Endothelial cell of umbilical vein (primary cell): ENCODE measurements at regions of chr17 and their contacts with region 1.

Region 1: GRCh38 chr17:79747508-79748295 is 17.0 kb downstream of the ENPP7 start:
- DNase-seq: no peak
- H3K4me3 ChIP-seq: no peak overlapping the region
- H3K27ac ChIP-seq: no peak overlapping the region
- H3K4me1 ChIP-seq: no peaks in the 10 kb centered on the region
- H3K27me3 ChIP-seq: peaks cover 27 to 45% of the 10 kb centered on the region in 2 experiments
- CTCF ChIP-seq: no peak
- POLR2A ChIP-seq: no peak

Region 2: GRCh38 chr17:79400989-79401703 is 346.6 kb before region 1 on chr17:
- CTCF ChIA-PET with region 1: no interaction called
- POLR2A ChIA-PET with region 1: no interaction called
- dilution Hi-C with region 1: no loop called
- intact Hi-C with region 1: no loop called
- DNase-seq: peak; percentile 73
- H3K4me3 ChIP-seq: no peak overlapping the region
- H3K27ac ChIP-seq: no peak overlapping the region
- H3K4me1 ChIP-seq: peaks cover 4% of the 10 kb centered on the region
- H3K27me3 ChIP-seq: peaks cover 6 to 10% of the 10 kb centered on the region in 2 experiments
- CTCF ChIP-seq: peak; percentile 87 to 92
- POLR2A ChIP-seq: no peak

Region 3: GRCh38 chr17:79777894-79778503 is 30.3 kb after region 1 on chr17 and contains the start of gene CBX2:
- CTCF ChIA-PET with region 1: interaction called, 14 read pairs
- POLR2A ChIA-PET with region 1: no interaction called
- dilution Hi-C with region 1: no loop called
- intact Hi-C with region 1: no loop called
- DNase-seq: peak; percentile 58
- H3K4me3 ChIP-seq: peak within 1 kb of the TSS; percentile 67 to 95 (median 69)
- H3K27ac ChIP-seq: no peak within 1 kb of the TSS
- H3K4me1 ChIP-seq: peaks cover 20% of the 10 kb centered on the region
- H3K27me3 ChIP-seq: peaks cover 9 to 10% of the 10 kb centered on the region in 2 experiments
- CTCF ChIP-seq: no peak
- POLR2A ChIP-seq: no peak
- total RNA-seq, gene CBX2: 19.8 and 20.0 TPM in 2 replicates

Region 4: DNA sequence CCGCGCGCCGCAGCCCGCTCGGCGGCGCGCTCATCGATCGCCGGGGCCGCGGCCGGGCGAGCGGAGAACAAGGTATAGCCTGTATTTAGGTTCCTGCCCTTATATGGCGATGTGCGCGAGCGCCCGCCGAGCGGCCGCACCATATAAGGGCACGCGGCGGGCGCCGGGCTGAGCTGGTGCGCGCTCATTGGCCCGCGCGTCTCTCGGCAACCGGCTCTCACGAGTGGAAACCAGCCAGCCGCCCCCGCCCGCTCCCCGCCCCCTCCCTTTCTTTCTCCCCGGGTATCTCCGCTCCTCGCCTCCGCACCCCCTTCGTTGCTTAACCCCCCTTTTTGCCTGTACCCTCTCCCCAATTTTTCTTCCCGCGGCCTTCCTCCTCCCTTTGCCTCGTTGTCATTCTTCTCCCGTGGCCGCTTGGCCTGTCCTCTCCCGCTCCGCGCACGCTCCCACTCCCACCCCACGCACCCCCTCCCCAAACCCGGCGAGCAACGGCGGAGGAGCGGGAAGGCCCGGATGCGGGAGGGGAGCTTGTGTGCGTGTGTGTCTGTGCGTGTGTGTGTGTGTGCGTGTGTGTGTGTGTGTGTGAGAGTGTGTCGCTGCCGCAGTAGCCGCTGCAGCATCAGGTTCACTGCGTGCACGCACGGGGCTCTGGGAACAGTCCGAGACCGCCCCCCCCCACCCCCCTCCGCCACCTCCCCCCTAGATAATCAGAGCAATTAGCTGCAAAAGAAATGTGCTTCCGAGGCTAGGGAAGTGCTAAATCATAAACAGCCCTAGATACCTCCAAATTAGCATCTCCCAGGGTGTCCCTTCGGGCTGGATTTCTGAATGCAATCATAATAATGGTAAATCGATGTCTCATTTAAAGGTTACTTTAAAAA is 62.7 kb after region 1 on chr17:
- CTCF ChIA-PET with region 1: interaction called, 29 read pairs
- POLR2A ChIA-PET with region 1: interaction called, 5 read pairs
- dilution Hi-C with region 1: no loop called
- intact Hi-C with region 1: loop called (anchors 2 kb)
- DNase-seq: peak; percentile 64
- H3K4me3 ChIP-seq: no peak overlapping the region
- H3K27ac ChIP-seq: no peak overlapping the region
- H3K4me1 ChIP-seq: peaks cover 8% of the 10 kb centered on the region
- H3K27me3 ChIP-seq: peaks cover 69 to 82% of the 10 kb centered on the region in 2 experiments
- CTCF ChIP-seq: no peak
- POLR2A ChIP-seq: no peak

Region 5: GRCh38 chr17:79844869-79845600 is 97.3 kb after region 1 on chr17:
- CTCF ChIA-PET with region 1: interaction called, 14 read pairs
- POLR2A ChIA-PET with region 1: no interaction called
- dilution Hi-C with region 1: no loop called
- intact Hi-C with region 1: no loop called
- DNase-seq: no peak
- H3K4me3 ChIP-seq: no peak overlapping the region
- H3K27ac ChIP-seq: no peak overlapping the region
- H3K4me1 ChIP-seq: peaks cover 11% of the 10 kb centered on the region
- H3K27me3 ChIP-seq: peaks cover 37 to 48% of the 10 kb centered on the region in 2 experiments
- CTCF ChIP-seq: peak; percentile 56 to 88
- POLR2A ChIP-seq: no peak

Region 6: GRCh38 chr17:79874329-79874981 is 126.8 kb after region 1 on chr17:
- CTCF ChIA-PET with region 1: no interaction called
- POLR2A ChIA-PET with region 1: no interaction called
- dilution Hi-C with region 1: no loop called
- intact Hi-C with region 1: no loop called
- DNase-seq: peak; percentile 46
- H3K4me3 ChIP-seq: no peak overlapping the region
- H3K27ac ChIP-seq: no peak overlapping the region
- H3K4me1 ChIP-seq: no peaks in the 10 kb centered on the region
- H3K27me3 ChIP-seq: no peaks in the 10 kb centered on the region
- CTCF ChIP-seq: peak; percentile 35 to 36
- POLR2A ChIP-seq: no peak

Region 7: DNA sequence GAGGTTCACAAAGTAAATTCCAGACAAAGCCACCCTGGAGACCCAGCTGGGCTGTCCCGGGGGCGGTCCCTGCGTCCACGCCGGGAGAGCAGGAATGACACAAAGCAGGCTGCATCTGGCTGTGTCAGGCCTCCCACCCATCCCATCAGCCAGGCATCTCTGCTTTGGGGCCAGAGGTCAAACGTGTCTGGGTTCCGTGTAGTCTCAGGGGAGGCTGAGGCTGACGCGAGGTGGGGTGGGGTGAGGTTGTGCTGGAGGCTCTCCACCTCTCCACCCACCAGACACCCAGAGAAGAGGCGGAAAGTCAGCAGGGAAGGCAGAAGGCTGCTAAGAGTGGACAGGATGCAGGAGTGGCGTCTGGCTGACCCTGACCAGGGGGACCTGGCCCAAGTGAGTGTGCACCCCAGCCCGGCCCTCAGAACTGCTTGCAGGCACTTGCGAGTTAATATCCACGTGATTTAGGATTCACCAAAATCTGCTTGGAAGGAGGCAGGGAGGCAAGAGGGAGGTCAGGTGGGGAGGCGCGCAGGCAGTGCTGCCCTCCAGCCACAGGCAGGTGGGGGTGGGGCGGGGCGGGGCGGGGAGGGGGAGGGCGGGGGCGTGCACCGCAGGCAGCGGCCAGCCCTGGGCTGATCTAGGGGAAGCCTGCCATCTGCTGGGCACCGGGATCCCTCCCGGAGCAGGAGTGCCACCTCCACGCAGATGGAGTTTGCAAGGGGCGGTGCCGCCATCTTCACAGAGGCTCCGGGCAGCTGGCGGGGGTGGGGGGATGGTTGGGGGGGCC is 243.6 kb after region 1 on chr17:
- CTCF ChIA-PET with region 1: interaction called, 21 read pairs
- POLR2A ChIA-PET with region 1: no interaction called
- dilution Hi-C with region 1: no loop called
- intact Hi-C with region 1: loop called (anchors 1 kb)
- DNase-seq: peak; percentile 70
- H3K4me3 ChIP-seq: peak overlapping the region in 1 of 3 experiments; percentile 14
- H3K27ac ChIP-seq: no peak overlapping the region
- H3K4me1 ChIP-seq: peaks cover 20% of the 10 kb centered on the region
- H3K27me3 ChIP-seq: no peaks in the 10 kb centered on the region
- CTCF ChIP-seq: peak; percentile 24 to 79
- POLR2A ChIP-seq: no peak

Region 8: GRCh38 chr17:80169784-80170500 is 422.2 kb after region 1 on chr17 and contains the start of gene CARD14:
- CTCF ChIA-PET with region 1: no interaction called
- POLR2A ChIA-PET with region 1: no interaction called
- dilution Hi-C with region 1: no loop called
- intact Hi-C with region 1: no loop called
- DNase-seq: no peak
- H3K4me3 ChIP-seq: no peak within 1 kb of the TSS
- H3K27ac ChIP-seq: no peak within 1 kb of the TSS
- H3K4me1 ChIP-seq: no peaks in the 10 kb centered on the region
- H3K27me3 ChIP-seq: peaks cover 4% of the 10 kb centered on the region in 2 experiments
- CTCF ChIP-seq: no peak
- POLR2A ChIP-seq: no peak
- total RNA-seq, gene CARD14: not detected in 2 replicates